ENCODE measurements at regions of chr6 and their contacts with region 1.

Region 1: GRCh38 chr6:22149096-22149495 is 147.7 kb downstream of the PRL start:
- DNase-seq: peak in 1 of 35 experiments; percentile 10
- ATAC-seq: no peak
- H3K4me3 ChIP-seq: no peak overlapping the region
- H3K4me3 Mint-ChIP-seq: peak overlapping the region in 1 of 3 donors; percentile 92
- H3K27ac ChIP-seq: no peak overlapping the region
- H3K27ac Mint-ChIP-seq: peak overlapping the region in 1 of 2 donors; percentile 59
- H3K4me1 ChIP-seq: peaks cover 13 to 30% of the 10 kb centered on the region in 2 experiments
- H3K4me1 Mint-ChIP-seq: peaks cover 7 to 36% (median 21%) of the 10 kb centered on the region in 3 donors
- H3K27me3 ChIP-seq: peaks cover 0 to 9% of the 10 kb centered on the region in 2 experiments
- H3K27me3 Mint-ChIP-seq: peaks cover 13 to 14% of the 10 kb centered on the region in 2 donors

Region 2: GRCh38 chr6:21666853-21667681 is 482.0 kb before region 1 on chr6:
- CTCF ChIA-PET with region 1: no interaction called
- POLR2A ChIA-PET with region 1: interaction called in 1 of 2 experiments, 10 read pairs
- DNase-seq: no peak
- ATAC-seq: no peak
- H3K4me3 ChIP-seq: peak overlapping the region in 1 of 2 donors; percentile 87
- H3K4me3 Mint-ChIP-seq: peak overlapping the region; percentile 9 to 74 (median 45)
- H3K27ac ChIP-seq: no peak overlapping the region
- H3K27ac Mint-ChIP-seq: no peak overlapping the region
- H3K4me1 ChIP-seq: peaks cover 7 to 29% of the 10 kb centered on the region in 2 experiments
- H3K4me1 Mint-ChIP-seq: peaks cover 28 to 40% (median 33%) of the 10 kb centered on the region in 3 donors
- H3K27me3 ChIP-seq: peaks cover 0 to 45% of the 10 kb centered on the region in 2 experiments
- H3K27me3 Mint-ChIP-seq: peaks cover 54 to 63% of the 10 kb centered on the region in 2 donors

Measured in T-cell (primary cell).